HEK293 (cell line): ENCODE measurements at regions of chr6 and their contacts with region 1.

Region 1: DNA sequence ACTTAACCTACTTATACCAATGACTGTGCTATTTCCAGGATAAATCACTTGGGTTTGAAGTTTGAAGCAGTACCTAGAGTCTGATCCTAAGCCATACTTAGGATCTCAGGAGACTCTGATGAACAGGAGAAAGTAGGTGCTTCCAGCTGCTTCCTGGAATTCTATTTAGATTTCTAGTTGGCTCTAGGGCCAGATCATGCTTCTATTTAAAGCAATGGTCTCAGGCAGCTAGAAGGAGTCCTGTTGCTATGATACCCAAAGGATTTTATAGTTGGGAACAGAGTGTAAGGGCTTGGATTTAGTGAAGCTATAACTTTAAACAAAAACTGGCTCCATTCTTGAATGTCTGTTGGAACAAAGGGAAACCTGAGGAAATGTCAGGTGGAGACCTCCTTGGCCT is 52.4 kb upstream of the TINAG start:
- H3K4me3 ChIP-seq: no peak overlapping the region
- H3K27ac ChIP-seq: no peak overlapping the region
- H3K4me1 ChIP-seq: no peaks in the 10 kb centered on the region
- CTCF ChIP-seq: no peak

Region 2: DNA sequence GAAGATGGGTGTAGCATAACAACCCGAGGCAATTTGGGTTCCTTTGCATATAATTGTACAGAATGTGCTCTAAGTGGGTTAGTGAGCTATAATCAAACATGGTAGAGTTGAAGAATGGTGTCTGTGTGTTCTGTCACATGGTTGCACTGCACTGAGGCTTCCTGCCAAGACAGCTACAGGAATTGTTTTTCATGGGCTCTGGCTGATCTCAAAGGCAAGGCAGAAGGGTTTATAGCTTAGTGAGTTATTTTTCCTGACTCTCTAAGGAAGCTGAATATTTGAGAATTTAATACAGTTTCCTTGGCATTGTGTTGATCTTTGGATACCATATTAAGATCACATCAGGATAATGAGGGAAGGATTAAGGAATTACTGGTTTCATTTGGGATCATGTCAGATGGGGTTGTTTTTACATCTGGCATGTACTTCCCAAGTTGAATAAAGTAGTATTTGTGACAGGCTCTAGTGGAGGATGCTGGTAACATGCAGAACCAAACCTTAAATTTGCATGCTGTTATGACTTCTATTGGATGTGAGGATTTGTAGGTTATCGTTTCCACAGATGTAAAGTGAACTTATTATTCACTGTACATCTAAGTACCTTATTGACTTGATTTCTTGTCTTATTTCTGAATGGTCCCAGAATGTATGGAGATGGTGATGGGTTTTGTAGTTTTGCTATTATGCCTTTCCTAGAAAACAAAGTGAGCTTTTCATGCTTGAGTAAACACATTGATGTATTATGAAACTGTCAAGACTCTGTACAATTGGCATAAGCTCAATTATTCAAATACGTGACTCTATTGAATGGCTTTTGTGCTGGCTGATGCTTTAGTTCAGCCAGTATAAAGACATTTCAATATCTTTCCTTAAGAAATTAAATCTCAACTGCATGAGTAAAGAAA is 417.8 kb before region 1 on chr6:
- CTCF ChIA-PET with region 1: no interaction called
- POLR2A ChIA-PET with region 1: no interaction called
- H3K4me3 ChIP-seq: no peak overlapping the region
- H3K27ac ChIP-seq: no peak overlapping the region
- H3K4me1 ChIP-seq: peaks cover 21% of the 10 kb centered on the region
- CTCF ChIP-seq: no peak

Region 3: GRCh38 chr6:54222217-54222616 is 33.7 kb before region 1 on chr6:
- CTCF ChIA-PET with region 1: interaction called, 3 read pairs
- POLR2A ChIA-PET with region 1: interaction called, 17 read pairs
- H3K4me3 ChIP-seq: no peak overlapping the region
- H3K27ac ChIP-seq: no peak overlapping the region
- H3K4me1 ChIP-seq: no peaks in the 10 kb centered on the region
- CTCF ChIP-seq: no peak

Region 4: GRCh38 chr6:54244430-54244829 is 11.5 kb before region 1 on chr6:
- CTCF ChIA-PET with region 1: interaction called, 27 read pairs
- POLR2A ChIA-PET with region 1: no interaction called
- H3K4me3 ChIP-seq: no peak overlapping the region
- H3K27ac ChIP-seq: no peak overlapping the region
- H3K4me1 ChIP-seq: no peaks in the 10 kb centered on the region
- CTCF ChIP-seq: no peak

Region 5: DNA sequence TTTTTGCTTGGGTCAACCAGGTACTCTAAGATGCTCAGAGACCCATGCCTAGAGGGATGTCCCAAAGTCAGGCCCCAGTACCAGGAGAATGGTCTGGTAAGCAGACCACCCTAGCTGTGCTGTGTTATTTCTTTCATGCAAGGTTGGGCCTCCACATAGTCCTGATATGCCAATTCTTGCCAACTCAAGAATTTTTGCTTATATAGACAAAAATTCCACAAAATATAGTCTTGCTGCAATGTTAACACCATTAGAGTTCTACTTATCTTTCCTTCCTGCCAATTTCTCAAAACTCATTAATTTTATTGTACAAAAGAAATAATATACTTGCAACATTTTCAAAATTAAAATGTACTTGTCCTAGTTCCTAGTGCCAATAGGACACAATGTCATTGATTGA is 18.5 kb after region 1 on chr6:
- CTCF ChIA-PET with region 1: no interaction called
- POLR2A ChIA-PET with region 1: no interaction called
- H3K4me3 ChIP-seq: no peak overlapping the region
- H3K27ac ChIP-seq: no peak overlapping the region
- H3K4me1 ChIP-seq: no peaks in the 10 kb centered on the region
- CTCF ChIP-seq: no peak

Region 6: DNA sequence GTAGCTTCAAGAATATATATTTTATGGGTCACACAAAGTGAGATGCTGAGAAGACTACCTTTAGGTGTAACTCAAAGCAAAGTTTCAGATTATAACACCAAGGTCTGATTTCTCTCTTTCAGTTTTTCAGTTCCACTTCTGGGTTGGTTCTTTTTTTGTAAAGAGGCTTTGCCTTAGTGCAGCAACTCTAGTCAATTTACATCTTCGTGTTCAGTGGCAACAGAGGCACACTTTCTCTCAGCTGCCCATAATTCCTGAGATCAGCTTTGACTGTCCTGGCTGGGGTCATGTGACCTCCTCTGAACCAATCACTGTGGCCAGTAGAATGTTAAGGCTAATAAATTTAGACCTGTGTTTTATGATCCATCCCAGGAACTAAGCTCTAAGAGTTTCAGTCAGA is 172.5 kb after region 1 on chr6:
- CTCF ChIA-PET with region 1: no interaction called
- POLR2A ChIA-PET with region 1: no interaction called
- H3K4me3 ChIP-seq: no peak overlapping the region
- H3K27ac ChIP-seq: no peak overlapping the region
- H3K4me1 ChIP-seq: no peaks in the 10 kb centered on the region
- CTCF ChIP-seq: no peak

Region 7: GRCh38 chr6:54970337-54970736 is 714.5 kb after region 1 on chr6:
- CTCF ChIA-PET with region 1: no interaction called
- POLR2A ChIA-PET with region 1: no interaction called
- H3K4me3 ChIP-seq: no peak overlapping the region
- H3K27ac ChIP-seq: no peak overlapping the region
- H3K4me1 ChIP-seq: no peaks in the 10 kb centered on the region
- CTCF ChIP-seq: no peak